ENCODE measurements at regions of chr1 and their contacts with region 1.

Region 1: DNA sequence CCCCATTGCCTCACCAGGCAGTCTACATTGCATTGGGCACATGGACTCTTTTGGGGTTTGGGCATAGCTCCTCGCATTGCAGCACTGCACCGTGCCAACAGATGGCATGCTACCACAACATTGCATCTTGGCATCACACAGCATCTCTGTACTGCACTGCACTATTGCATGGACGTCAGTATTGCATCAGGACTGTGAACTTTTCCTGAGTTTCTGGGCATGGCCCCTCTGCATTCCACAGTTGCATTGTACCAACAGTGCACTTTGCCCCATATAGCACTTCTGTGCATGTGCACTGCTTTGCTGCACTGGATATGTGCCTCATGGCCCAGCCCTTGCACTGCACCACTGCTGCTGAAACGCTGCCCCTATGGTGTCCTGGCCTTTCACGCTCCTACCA is 9.6 kb downstream of the PTPRU start:
- DNase-seq: no peak
- ATAC-seq: peak; percentile 85
- H3K4me3 ChIP-seq: no peak overlapping the region
- H3K27ac ChIP-seq: no peak overlapping the region
- H3K4me1 ChIP-seq: peaks cover 0 to 5% of the 10 kb centered on the region in 2 experiments; a peak in 1 of 4 replicates
- H3K27me3 ChIP-seq: no peaks in the 10 kb centered on the region
- CTCF ChIP-seq: peak; percentile 32 to 54 (median 47); a peak in 4 of 6 replicates
- POLR2A ChIP-seq: no peak
- RAD21 ChIP-seq: peak; percentile 73

Region 2: GRCh38 chr1:28983509-28984310 is 262.2 kb before region 1 on chr1:
- CTCF ChIA-PET with region 1: no interaction called
- POLR2A ChIA-PET with region 1: no interaction called
- RAD21 ChIA-PET with region 1: no interaction called
- intact Hi-C with region 1: no loop called
- DNase-seq: no peak
- ATAC-seq: peak; percentile 75
- H3K4me3 ChIP-seq: no peak overlapping the region
- H3K27ac ChIP-seq: no peak overlapping the region
- H3K4me1 ChIP-seq: peaks cover 0 to 7% of the 10 kb centered on the region in 2 experiments; a peak in 1 of 4 replicates
- H3K27me3 ChIP-seq: no peaks in the 10 kb centered on the region
- CTCF ChIP-seq: peak in 2 of 3 experiments; percentile 19 to 25; a peak in 2 of 6 replicates
- POLR2A ChIP-seq: no peak
- RAD21 ChIP-seq: peak; percentile 45

Region 3: GRCh38 chr1:29210278-29211085 is 35.4 kb before region 1 on chr1:
- CTCF ChIA-PET with region 1: no interaction called
- POLR2A ChIA-PET with region 1: no interaction called
- RAD21 ChIA-PET with region 1: no interaction called
- intact Hi-C with region 1: no loop called
- DNase-seq: no peak
- ATAC-seq: no peak
- H3K4me3 ChIP-seq: no peak overlapping the region
- H3K27ac ChIP-seq: no peak overlapping the region
- H3K4me1 ChIP-seq: no peaks in the 10 kb centered on the region
- H3K27me3 ChIP-seq: no peaks in the 10 kb centered on the region
- CTCF ChIP-seq: no peak
- POLR2A ChIP-seq: no peak
- RAD21 ChIP-seq: no peak

Region 4: GRCh38 chr1:29341936-29342335 is 96.1 kb after region 1 on chr1:
- CTCF ChIA-PET with region 1: no interaction called
- POLR2A ChIA-PET with region 1: no interaction called
- RAD21 ChIA-PET with region 1: no interaction called
- intact Hi-C with region 1: loop called (anchors 10 kb)
- DNase-seq: no peak
- ATAC-seq: peak; percentile 53; the same call in 1 of the 2 replicates
- H3K4me3 ChIP-seq: no peak overlapping the region
- H3K27ac ChIP-seq: no peak overlapping the region
- H3K4me1 ChIP-seq: no peaks in the 10 kb centered on the region
- H3K27me3 ChIP-seq: peaks cover 15% of the 10 kb centered on the region; the same call in 1 of the 2 replicates
- CTCF ChIP-seq: peak in 2 of 3 experiments; percentile 14 to 18; a peak in 1 of 6 replicates
- POLR2A ChIP-seq: no peak
- RAD21 ChIP-seq: peak; percentile 24; the same call in 1 of the 2 replicates

Region 5: DNA sequence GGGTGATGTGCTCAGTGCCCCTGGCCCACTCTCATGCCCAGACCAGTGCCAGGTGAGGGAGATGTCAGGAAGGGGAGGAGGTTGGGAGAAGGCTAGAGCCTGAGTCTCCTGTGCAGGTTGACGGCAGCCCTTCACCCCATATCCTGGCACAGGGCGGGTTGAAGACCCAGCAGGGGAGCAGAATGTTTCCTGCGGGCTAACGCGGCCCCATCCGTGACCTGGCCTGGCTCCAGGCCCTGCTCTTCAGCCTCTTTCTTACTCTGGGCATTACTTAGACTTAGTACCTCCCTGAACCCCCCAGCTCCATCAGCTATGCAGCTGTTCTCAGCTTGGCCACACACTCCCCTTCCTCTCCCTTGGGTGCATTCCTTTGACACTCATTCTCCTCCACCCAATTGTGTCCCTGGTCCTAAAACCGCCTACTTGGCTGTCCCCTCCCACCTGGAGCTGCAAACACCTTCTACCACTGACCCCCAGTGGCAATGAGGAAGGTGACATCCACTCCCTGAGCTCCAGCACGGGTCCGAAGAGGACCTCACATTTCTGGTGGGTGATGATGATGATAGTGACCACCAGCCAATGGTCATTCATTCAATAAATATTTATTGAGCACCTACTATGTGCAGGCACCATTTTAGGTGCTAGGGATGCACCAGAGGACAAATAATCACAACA is 169.4 kb after region 1 on chr1:
- CTCF ChIA-PET with region 1: interaction called, 6 read pairs
- POLR2A ChIA-PET with region 1: no interaction called
- RAD21 ChIA-PET with region 1: no interaction called
- intact Hi-C with region 1: loop called (anchors 5 kb)
- DNase-seq: peak; percentile 54
- ATAC-seq: peak; percentile 96
- H3K4me3 ChIP-seq: no peak overlapping the region
- H3K27ac ChIP-seq: no peak overlapping the region
- H3K4me1 ChIP-seq: 0 out of 4 replicates have a peak, but pooled peaks cover 3 to 4% of the 10 kb centered on the region in 2 experiments
- H3K27me3 ChIP-seq: peaks cover 3% of the 10 kb centered on the region; the same call in 1 of the 2 replicates
- CTCF ChIP-seq: peak; percentile 47 to 67 (median 59); a peak in 5 of 6 replicates
- POLR2A ChIP-seq: no peak
- RAD21 ChIP-seq: peak; percentile 67

Region 6: GRCh38 chr1:29639741-29640427 is 394.0 kb after region 1 on chr1:
- CTCF ChIA-PET with region 1: no interaction called
- POLR2A ChIA-PET with region 1: no interaction called
- RAD21 ChIA-PET with region 1: no interaction called
- intact Hi-C with region 1: no loop called
- DNase-seq: peak; percentile 58
- ATAC-seq: peak; percentile 80
- H3K4me3 ChIP-seq: peak overlapping the region in 1 of 2 experiments; percentile 19; a peak in 1 of 4 replicates
- H3K27ac ChIP-seq: peak overlapping the region; percentile 42
- H3K4me1 ChIP-seq: peaks cover 20 to 34% of the 10 kb centered on the region in 2 experiments
- H3K27me3 ChIP-seq: no peaks in the 10 kb centered on the region
- CTCF ChIP-seq: no peak
- POLR2A ChIP-seq: no peak
- RAD21 ChIP-seq: no peak